Activated CD8-positive, alpha-beta memory T cell treated with anti-CD3 and anti-CD28 coated beads, Interleukin-2, amount 10 ng/mL, durations not matched to agents 7 days and 5 days (primary cell): ENCODE measurements at regions of chr4 and their contacts with region 1.

Region 1: DNA sequence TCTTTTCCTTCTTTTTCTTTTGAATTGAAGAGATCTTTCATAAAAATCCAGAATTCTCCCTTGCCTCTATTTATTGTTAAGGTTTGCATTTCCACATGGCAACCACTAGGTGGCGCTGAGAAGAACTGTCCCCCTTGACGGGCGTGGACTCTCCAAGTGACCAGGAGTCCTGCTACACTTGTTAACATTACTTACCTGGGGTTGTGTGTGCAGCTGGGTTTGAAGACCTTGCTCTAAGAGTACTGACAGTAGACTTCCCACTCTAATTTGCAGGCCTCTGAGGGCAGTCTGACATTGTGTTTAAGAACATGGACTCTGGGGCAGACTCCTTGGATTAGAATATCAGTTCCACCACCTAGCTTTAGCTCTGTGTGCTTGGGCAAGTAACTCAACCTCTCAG is 52.8 kb downstream of the GPRIN3 start:
- DNase-seq: peak; percentile 58
- ATAC-seq: peak; percentile 82
- H3K4me3 Mint-ChIP-seq: no peak overlapping the region
- H3K27ac Mint-ChIP-seq: peak overlapping the region; percentile 55
- H3K4me1 Mint-ChIP-seq: peaks cover 53% of the 10 kb centered on the region
- H3K27me3 Mint-ChIP-seq: no peaks in the 10 kb centered on the region

Region 2: DNA sequence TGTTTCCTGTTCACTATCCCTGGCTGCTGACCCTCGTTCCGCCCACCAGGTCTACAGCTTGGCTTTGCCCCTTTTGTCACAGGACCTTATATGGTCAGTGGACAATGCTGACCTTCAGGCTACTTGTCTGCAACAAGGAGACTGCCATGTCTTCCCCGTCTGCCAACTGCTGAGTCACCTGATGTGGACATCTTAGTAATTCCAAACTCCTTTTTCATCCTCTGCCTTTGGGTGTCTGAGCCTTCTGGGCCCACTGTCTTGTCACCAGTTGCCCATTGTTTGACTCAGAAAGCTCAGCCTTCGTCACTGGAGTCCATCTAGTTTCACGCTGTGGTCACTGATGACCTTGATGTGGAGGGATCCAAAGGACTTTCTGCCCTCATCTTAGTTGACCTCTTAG is 22.6 kb after region 1 on chr4:
- CTCF ChIA-PET with region 1: interaction called, 23 read pairs
- DNase-seq: no peak
- ATAC-seq: no peak
- H3K4me3 Mint-ChIP-seq: no peak overlapping the region
- H3K27ac Mint-ChIP-seq: no peak overlapping the region
- H3K4me1 Mint-ChIP-seq: peaks cover 26% of the 10 kb centered on the region
- H3K27me3 Mint-ChIP-seq: no peaks in the 10 kb centered on the region

Region 3: DNA sequence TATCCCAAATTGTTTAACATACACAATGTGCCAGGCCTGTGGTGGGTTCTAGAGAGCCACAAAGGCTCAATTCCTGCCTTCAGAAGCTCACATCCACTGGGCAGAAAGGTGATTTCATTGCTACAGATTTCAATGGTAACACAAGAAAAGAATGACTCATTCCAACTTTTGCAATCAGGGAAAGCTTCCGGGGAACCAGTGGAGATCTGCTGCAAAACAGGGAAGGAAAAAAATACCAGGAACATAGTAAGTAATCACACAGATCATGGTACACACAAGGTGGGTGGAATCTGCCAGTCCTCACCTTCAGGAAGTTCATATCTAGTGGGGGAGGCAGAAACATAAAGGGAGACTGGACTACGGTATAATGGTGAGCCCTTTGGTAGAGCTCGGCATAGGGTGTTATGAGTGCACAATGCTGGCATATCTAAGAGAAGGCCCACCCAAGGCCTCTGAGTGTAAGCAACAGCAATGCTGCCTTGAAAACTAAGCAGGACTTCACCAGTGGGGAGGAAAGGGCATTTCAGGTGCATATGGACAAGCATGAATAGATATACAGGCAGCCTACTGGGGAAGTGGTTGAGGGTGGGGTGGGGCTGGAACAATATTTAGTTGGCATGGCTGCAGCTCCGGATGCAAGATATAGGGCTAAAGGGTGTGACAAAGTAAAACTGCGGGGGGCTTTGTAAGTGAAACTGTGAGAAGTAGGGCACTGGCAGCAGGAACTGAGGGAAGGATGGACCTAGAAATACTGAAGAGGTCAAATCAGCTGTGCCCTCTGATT is 28.6 kb after region 1 on chr4:
- CTCF ChIA-PET with region 1: interaction called, 23 read pairs
- DNase-seq: peak; percentile 84
- ATAC-seq: peak; percentile 76
- H3K4me3 Mint-ChIP-seq: peak overlapping the region; percentile 64
- H3K27ac Mint-ChIP-seq: peak overlapping the region; percentile 91
- H3K4me1 Mint-ChIP-seq: peaks cover 65% of the 10 kb centered on the region
- H3K27me3 Mint-ChIP-seq: no peaks in the 10 kb centered on the region